ENCODE measurements at regions of chr1 and their contacts with region 1.

Region 1: DNA sequence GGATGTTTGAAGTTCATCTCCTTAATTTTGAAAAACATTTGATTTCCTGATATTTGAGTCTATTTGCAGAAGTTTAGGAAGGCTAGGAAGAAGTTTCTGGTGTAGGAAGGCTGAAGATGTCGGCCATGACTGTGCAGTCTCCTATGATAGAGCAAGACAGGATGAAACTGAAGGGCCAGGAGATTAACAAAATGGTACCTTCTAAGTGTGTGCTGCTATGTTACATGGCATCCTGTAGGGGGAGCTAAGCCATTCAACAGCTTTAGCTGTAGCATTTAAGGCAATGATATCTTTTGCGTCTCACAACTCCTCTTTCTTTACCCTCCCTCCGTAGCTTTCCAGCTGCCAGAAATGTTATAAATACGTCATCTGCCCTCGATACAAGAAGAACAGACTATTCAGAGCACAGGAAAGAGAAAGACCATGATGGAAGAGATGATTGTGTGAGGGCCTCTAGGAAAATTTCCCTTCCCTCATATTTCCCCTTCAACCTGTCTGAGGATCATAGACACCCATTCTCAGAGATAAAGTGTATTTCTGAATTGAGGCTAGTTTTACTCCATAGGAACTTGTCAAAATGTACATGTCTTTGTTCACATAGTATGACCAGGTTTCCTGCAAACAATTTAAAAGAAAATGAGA is 61.1 kb downstream of the XCL1 start:
- DNase-seq: peak; percentile 80
- H3K4me3 ChIP-seq: no peak overlapping the region
- H3K27ac ChIP-seq: no peak overlapping the region
- H3K4me1 ChIP-seq: no peaks in the 10 kb centered on the region
- H3K27me3 ChIP-seq: no peaks in the 10 kb centered on the region
- CTCF ChIP-seq: peak; percentile 90

Region 2: GRCh38 chr1:169133801-169134502 is 496.5 kb after region 1 on chr1:
- CTCF ChIA-PET with region 1: no interaction called
- POLR2A ChIA-PET with region 1: no interaction called
- intact Hi-C with region 1: loop called (anchors 10 kb)
- DNase-seq: no peak
- H3K4me3 ChIP-seq: no peak overlapping the region
- H3K27ac ChIP-seq: no peak overlapping the region
- H3K4me1 ChIP-seq: no peaks in the 10 kb centered on the region
- H3K27me3 ChIP-seq: no peaks in the 10 kb centered on the region
- CTCF ChIP-seq: no peak; the same call in 1 of the 2 replicates